ENCODE measurements at regions of chr12 and their contacts with region 1.

Region 1: GRCh38 chr12:8544295-8544694 is 3.6 kb upstream of the CLEC4E start:
- DNase-seq: peak; percentile 82
- H3K4me3 ChIP-seq: no peak overlapping the region
- H3K27ac ChIP-seq: peak overlapping the region in 1 of 8 donors; percentile 63
- H3K4me1 ChIP-seq: peaks cover 0 to 37% (median 11%) of the 10 kb centered on the region in 6 donors
- H3K27me3 ChIP-seq: peaks cover 0 to 44% (median 0%) of the 10 kb centered on the region in 7 donors
- CTCF ChIP-seq: peak; percentile 51 to 92 (median 84)
- POLR2A ChIP-seq: no peak

Region 2: GRCh38 chr12:8590842-8591550 is 46.7 kb after region 1 on chr12:
- intact Hi-C with region 1: no loop called
- DNase-seq: no peak
- H3K4me3 ChIP-seq: no peak overlapping the region
- H3K27ac ChIP-seq: no peak overlapping the region
- H3K4me1 ChIP-seq: peaks cover 0 to 10% (median 0%) of the 10 kb centered on the region in 6 donors
- H3K27me3 ChIP-seq: no peaks in the 10 kb centered on the region
- CTCF ChIP-seq: no peak
- POLR2A ChIP-seq: no peak

Region 3: DNA sequence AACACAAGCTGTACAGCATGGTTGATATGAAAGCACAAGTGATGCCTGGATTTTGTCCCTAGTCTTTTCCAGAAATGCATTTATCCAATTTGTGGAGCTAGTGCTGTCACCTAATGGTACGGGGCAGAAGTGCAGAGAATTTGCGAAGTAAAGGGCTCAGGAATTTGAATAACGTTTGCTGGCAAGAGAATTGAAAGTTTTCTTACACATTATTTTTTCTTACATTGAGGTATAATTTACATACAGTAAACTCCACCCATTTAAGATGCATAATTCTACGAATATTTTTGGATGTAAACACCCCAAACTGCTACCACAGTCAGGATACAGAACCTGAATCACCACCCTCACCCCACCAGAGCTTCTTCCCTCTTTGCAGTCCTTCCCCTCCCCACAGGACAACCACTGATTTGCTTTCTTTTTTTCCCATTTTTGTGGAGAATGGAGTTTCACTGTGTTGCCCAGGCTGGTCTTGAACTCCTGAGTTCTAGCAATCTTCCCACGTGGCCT is 64.8 kb after region 1 on chr12:
- intact Hi-C with region 1: loop called (anchors 5 kb)
- DNase-seq: no peak
- H3K4me3 ChIP-seq: peak overlapping the region in 2 of 8 donors; percentile 6 to 32
- H3K27ac ChIP-seq: peak overlapping the region in 1 of 8 donors; percentile 48
- H3K4me1 ChIP-seq: peaks cover 0 to 11% (median 8%) of the 10 kb centered on the region in 6 donors
- H3K27me3 ChIP-seq: no peaks in the 10 kb centered on the region
- CTCF ChIP-seq: peak in 10 of 11 experiments; percentile 27 to 75 (median 60)
- POLR2A ChIP-seq: no peak

Measured in spleen (tissue), 13 donors.